ENCODE measurements at regions of chr11 and their contacts with region 1.

Region 1: DNA sequence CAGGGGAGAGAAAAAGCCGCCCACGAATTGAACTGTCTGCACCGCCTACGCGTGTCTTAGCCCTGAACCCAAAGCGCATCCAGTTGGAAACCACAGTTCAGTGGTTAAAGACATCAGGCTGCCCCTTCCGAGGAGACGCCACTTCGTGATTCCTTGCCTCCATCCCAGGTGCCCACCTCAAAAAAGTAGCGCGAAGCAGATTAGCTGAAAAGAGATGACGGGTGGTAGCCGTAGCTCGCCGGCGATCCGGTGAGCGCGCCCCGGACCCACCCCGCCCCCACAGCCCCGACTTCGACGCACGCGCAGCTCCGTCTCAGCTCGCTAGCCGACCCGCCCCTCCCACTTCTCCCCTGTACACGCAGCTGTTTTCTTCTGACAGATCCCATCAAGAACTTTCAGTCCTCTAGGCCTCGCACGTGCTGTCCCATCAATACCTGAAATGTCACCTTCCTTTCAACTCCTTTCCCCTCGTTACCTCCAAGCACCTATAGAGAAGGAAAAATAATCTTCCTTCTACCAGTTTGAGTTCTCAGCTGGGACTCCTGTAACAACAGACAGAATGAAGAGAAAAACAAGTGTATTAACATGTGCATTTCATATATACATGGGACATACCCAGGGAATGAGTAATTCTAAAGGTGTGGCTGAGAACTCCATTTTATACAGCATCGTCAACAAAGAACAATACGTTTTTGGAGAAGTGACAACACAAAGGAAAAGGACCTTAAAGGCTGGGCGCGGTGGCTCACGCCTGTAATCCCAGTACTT is 49.5 kb downstream of the OR4D9 start:
- DNase-seq: peak; percentile 87
- ATAC-seq: peak; percentile 57
- H3K4me3 Mint-ChIP-seq: peak overlapping the region; percentile 87
- H3K27ac Mint-ChIP-seq: peak overlapping the region; percentile 90
- H3K4me1 Mint-ChIP-seq: peaks cover 48% of the 10 kb centered on the region
- H3K27me3 Mint-ChIP-seq: peaks cover 3% of the 10 kb centered on the region

Region 2: GRCh38 chr11:59463190-59463641 is 97.7 kb before region 1 on chr11:
- CTCF ChIA-PET with region 1: no interaction called
- POLR2A ChIA-PET with region 1: no interaction called
- DNase-seq: no peak
- ATAC-seq: no peak
- H3K4me3 Mint-ChIP-seq: no peak overlapping the region
- H3K27ac Mint-ChIP-seq: no peak overlapping the region
- H3K4me1 Mint-ChIP-seq: no peaks in the 10 kb centered on the region
- H3K27me3 Mint-ChIP-seq: peaks cover 16% of the 10 kb centered on the region

Region 3: GRCh38 chr11:59550368-59550841 is 10.5 kb before region 1 on chr11:
- CTCF ChIA-PET with region 1: interaction called, 15 read pairs
- POLR2A ChIA-PET with region 1: interaction called, 4 read pairs
- DNase-seq: peak; percentile 92
- ATAC-seq: peak; percentile 95
- H3K4me3 Mint-ChIP-seq: peak overlapping the region; percentile 80
- H3K27ac Mint-ChIP-seq: peak overlapping the region; percentile 92
- H3K4me1 Mint-ChIP-seq: peaks cover 37% of the 10 kb centered on the region
- H3K27me3 Mint-ChIP-seq: peaks cover 10% of the 10 kb centered on the region

Region 4: DNA sequence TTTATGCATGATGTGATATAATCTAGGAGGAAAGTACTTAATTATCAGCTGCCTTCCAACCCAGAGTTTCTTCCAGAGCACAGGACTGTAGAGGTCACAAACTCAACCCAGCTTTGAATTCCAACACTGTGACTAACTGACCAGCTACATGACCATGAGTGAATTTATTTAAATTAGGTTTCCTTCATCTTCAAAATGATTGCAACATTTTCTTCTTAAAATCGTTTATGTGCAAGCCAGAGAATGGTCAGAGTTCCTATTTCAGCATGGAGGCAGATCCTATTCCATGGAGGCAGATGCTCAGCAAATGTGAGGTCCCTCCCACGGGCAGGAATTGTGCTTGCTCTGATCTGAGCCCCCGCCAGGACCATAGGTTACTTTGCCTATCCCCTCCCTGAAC is 12.3 kb after region 1 on chr11:
- CTCF ChIA-PET with region 1: no interaction called
- POLR2A ChIA-PET with region 1: no interaction called
- DNase-seq: no peak
- ATAC-seq: no peak
- H3K4me3 Mint-ChIP-seq: no peak overlapping the region
- H3K27ac Mint-ChIP-seq: no peak overlapping the region
- H3K4me1 Mint-ChIP-seq: no peaks in the 10 kb centered on the region
- H3K27me3 Mint-ChIP-seq: no peaks in the 10 kb centered on the region